Heart right ventricle (tissue), 16 donors: ENCODE measurements at regions of chr7 and their contacts with region 1.

Region 1: GRCh38 chr7:79034730-79035129 is 418.7 kb downstream of the MAGI2 start:
- DNase-seq: no peak
- ATAC-seq: no peak
- H3K4me3 ChIP-seq: no peak overlapping the region
- H3K27ac ChIP-seq: no peak overlapping the region
- H3K4me1 ChIP-seq: no peaks in the 10 kb centered on the region
- H3K27me3 ChIP-seq: no peaks in the 10 kb centered on the region
- CTCF ChIP-seq: no peak

Region 2: GRCh38 chr7:79063019-79063698 is 28.4 kb after region 1 on chr7:
- intact Hi-C with region 1: loop called in 1 of 10 experiments (anchors 5 kb)
- DNase-seq: no peak
- ATAC-seq: no peak
- H3K4me3 ChIP-seq: no peak overlapping the region
- H3K27ac ChIP-seq: no peak overlapping the region
- H3K4me1 ChIP-seq: peaks cover 0 to 4% (median 0%) of the 10 kb centered on the region in 9 donors
- H3K27me3 ChIP-seq: no peaks in the 10 kb centered on the region
- CTCF ChIP-seq: no peak